ENCODE measurements at regions of chr2 and their contacts with region 1.

Region 1: DNA sequence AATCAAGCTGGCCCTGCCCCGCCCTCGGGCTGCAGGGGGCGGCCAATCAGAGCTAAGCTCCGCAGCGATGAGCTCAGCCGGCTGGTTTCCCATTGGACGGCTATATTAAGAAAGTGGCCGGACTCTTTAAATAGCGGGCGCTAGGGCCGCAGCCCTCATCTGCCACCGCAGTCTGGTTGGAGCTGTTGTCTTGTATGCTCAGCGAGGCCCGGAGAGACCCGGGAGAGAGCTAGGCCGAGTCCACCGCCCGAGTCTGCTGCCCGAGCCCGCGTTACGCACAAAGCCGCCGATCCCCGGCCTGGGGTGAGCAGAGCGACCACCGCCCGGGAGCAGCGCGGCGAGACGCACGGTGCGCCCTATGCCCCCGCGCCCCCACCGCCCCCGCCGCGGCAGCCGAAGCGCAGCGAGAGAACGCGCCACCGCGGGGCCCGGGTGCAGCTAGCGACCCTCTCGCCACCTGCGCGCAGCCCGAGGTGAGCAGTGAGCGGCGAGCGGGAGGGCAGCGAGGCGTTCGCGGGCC is at the start of gene RHOB:
- DNase-seq: peak; percentile 96 to 98 (median 98)
- ATAC-seq: peak; percentile 87 to 94 (median 88)
- H3K4me3 ChIP-seq: peak within 1 kb of the TSS; percentile 77 to 99 (median 95)
- H3K27ac ChIP-seq: peak within 1 kb of the TSS; percentile 94 to 100 (median 98)
- H3K4me1 ChIP-seq: peaks cover 0 to 58% (median 36%) of the 10 kb centered on the region in 12 donors
- H3K27me3 ChIP-seq: no peaks in the 10 kb centered on the region
- CTCF ChIP-seq: no peak
- POLR2A ChIP-seq: peak; percentile 2 to 100
- total RNA-seq, gene RHOB: 105 to 429 (median 169) TPM

Region 2: DNA sequence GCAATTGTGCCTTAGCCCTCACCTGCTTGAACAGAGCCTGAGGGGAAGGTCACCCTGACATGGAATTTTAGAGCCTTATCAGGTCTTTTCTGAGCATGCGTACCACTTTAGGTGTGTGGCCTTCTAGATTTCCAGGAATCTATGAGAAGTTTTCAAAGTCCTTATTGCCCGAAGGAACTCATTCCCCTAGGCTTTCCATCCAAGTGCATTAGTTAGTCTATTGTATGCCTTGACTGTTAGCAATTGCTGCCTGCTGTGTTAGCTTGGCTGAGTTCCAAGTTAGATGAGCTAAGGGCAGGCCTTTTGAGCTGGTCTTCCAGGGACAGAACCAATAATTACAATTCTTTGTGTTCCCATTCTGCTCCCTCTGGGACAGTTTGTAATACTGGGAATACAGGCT is 65.5 kb before region 1 on chr2:
- intact Hi-C with region 1: no loop called
- DNase-seq: peak in 1 of 5 donors; percentile 47
- ATAC-seq: peak; percentile 22 to 44 (median 32)
- H3K4me3 ChIP-seq: no peak overlapping the region
- H3K27ac ChIP-seq: peak overlapping the region in 2 of 12 donors; percentile 12 to 16
- H3K4me1 ChIP-seq: peaks cover 0 to 25% (median 13%) of the 10 kb centered on the region in 12 donors
- H3K27me3 ChIP-seq: no peaks in the 10 kb centered on the region
- CTCF ChIP-seq: no peak
- POLR2A ChIP-seq: no peak

Region 3: DNA sequence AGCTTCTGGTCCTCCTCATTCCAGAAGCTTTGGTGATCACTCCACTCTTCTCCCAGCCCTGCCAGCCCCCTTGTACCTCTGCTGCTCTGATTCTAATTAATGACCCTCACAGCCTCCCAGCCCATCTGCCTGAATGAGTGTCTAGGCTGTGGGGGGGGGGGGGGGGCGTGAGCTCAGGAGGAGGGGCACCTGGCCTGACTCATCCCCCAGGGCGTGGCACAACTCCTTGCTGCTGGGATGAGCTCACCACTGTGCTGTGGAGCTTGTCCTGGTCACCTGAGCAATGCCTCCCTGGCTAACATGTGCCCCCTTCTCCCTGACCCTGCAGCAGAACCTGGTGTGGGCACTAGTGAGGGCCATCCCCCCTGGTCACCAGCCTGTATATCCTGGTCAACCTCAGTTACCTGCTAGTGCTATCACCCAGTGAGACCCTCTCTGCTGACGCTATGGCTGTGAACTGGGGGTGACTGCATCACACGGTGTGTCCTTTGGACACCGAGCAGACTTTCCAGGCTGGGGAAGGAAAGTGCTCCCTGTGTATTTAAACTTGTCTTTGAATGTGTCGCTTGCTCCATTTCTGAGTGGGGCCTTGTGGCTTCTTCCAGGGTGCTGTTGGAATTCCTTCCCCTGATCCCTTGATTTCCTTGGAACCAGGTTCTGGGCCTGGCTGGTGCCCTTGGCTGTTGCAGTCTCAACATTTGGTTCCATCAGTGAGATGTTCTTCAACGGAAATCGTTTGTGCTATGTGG is 54.9 kb before region 1 on chr2:
- intact Hi-C with region 1: no loop called
- DNase-seq: no peak
- ATAC-seq: no peak
- H3K4me3 ChIP-seq: no peak overlapping the region
- H3K27ac ChIP-seq: no peak overlapping the region
- H3K4me1 ChIP-seq: no peaks in the 10 kb centered on the region
- H3K27me3 ChIP-seq: peaks cover 0 to 3% (median 0%) of the 10 kb centered on the region in 9 donors
- CTCF ChIP-seq: no peak
- POLR2A ChIP-seq: no peak

Region 4: DNA sequence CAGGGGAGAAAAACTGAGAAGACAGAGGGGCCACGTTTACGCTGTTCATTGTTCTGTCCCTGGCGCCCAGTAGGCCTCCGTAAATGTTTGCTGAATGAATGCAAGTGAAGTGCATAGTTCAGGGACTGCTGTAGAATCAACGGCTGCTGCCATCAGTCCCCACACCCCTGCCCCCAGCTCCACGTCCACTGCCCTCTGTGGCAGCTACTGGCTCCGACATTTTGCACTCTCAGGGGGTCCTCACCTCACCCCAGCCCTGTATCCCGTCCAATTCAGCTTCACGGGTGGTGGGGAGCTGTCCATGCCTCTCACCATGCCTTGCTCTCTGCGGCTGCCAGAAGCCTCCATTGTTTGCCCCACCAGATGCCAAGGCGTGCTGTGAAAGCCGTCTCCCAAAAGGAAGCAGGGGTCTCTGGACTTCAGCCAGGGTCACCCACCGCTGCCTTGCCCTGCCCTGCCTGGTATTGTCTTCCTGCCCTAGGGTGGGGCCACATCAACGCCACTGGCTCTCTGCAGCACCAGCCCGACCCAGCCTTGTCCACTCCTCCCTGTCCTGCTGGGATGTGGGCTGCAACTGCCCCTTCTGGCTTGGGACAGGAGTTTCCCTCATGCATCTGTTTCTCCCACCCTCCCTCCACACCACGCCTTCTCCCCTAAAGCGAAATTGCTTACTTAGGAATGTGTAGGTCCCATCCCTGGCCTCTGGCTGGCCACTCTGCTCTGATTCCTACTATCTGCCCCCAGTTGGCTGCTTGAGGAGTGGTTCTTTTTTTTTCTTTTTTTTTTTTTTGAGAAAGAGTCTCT is 85.9 kb after region 1 on chr2:
- intact Hi-C with region 1: loop called in 4 of 10 experiments (anchors 5 to 10 kb)
- DNase-seq: peak in 1 of 5 donors; percentile 49
- ATAC-seq: no peak
- H3K4me3 ChIP-seq: no peak overlapping the region
- H3K27ac ChIP-seq: peak overlapping the region in 6 of 12 donors; percentile 7 to 61 (median 35)
- H3K4me1 ChIP-seq: peaks cover 0 to 63% (median 25%) of the 10 kb centered on the region in 12 donors
- H3K27me3 ChIP-seq: no peaks in the 10 kb centered on the region
- CTCF ChIP-seq: no peak
- POLR2A ChIP-seq: no peak

Region 5: GRCh38 chr2:20595431-20596192 is 148.6 kb after region 1 on chr2:
- intact Hi-C with region 1: loop called in 2 of 10 experiments (anchors 5 to 10 kb)
- DNase-seq: peak in 3 of 5 donors; percentile 35 to 56 (median 36)
- ATAC-seq: peak in 1 of 4 donors; percentile 4
- H3K4me3 ChIP-seq: no peak overlapping the region
- H3K27ac ChIP-seq: peak overlapping the region; percentile 66 to 92 (median 79)
- H3K4me1 ChIP-seq: peaks cover 13 to 90% (median 63%) of the 10 kb centered on the region in 12 donors
- H3K27me3 ChIP-seq: no peaks in the 10 kb centered on the region
- CTCF ChIP-seq: no peak
- POLR2A ChIP-seq: peak in 1 of 2 donors; percentile 16

Region 6: GRCh38 chr2:20625491-20626391 is 178.8 kb after region 1 on chr2:
- intact Hi-C with region 1: loop called in 1 of 10 experiments (anchors 5 kb)
- DNase-seq: peak in 4 of 5 donors; percentile 60 to 81 (median 72)
- ATAC-seq: peak; percentile 19 to 71 (median 52)
- H3K4me3 ChIP-seq: no peak overlapping the region
- H3K27ac ChIP-seq: peak overlapping the region; percentile 54 to 99 (median 84)
- H3K4me1 ChIP-seq: peaks cover 0 to 68% (median 49%) of the 10 kb centered on the region in 12 donors
- H3K27me3 ChIP-seq: no peaks in the 10 kb centered on the region
- CTCF ChIP-seq: peak in 8 of 12 donors; percentile 10 to 40 (median 32)
- POLR2A ChIP-seq: no peak

Region 7: GRCh38 chr2:20642055-20642971 is 195.3 kb after region 1 on chr2:
- intact Hi-C with region 1: loop called in 7 of 10 experiments (anchors 1 to 5 kb)
- DNase-seq: peak; percentile 76 to 89 (median 79)
- ATAC-seq: peak; percentile 82 to 91 (median 88)
- H3K4me3 ChIP-seq: no peak overlapping the region
- H3K27ac ChIP-seq: peak overlapping the region in 6 of 12 donors; percentile 1 to 90 (median 52)
- H3K4me1 ChIP-seq: peaks cover 5 to 45% (median 23%) of the 10 kb centered on the region in 12 donors
- H3K27me3 ChIP-seq: no peaks in the 10 kb centered on the region
- CTCF ChIP-seq: peak; percentile 88 to 98 (median 96)
- POLR2A ChIP-seq: peak in 1 of 2 donors; percentile 15